AG04450 (cell line): ENCODE measurements at regions of chr4 and their contacts with region 1.

Region 1: GRCh38 chr4:83846193-83846830 is 310.4 kb downstream of the GPAT3 start:
- DNase-seq: no peak
- H3K4me3 ChIP-seq: no peak overlapping the region
- H3K27ac ChIP-seq: no peak overlapping the region
- H3K27me3 ChIP-seq: no peaks in the 10 kb centered on the region
- CTCF ChIP-seq: no peak

Region 2: GRCh38 chr4:82394910-82395309 is 1451.4 kb before region 1 on chr4:
- CTCF ChIA-PET with region 1: interaction called, 10 read pairs
- POLR2A ChIA-PET with region 1: no interaction called
- DNase-seq: no peak
- H3K4me3 ChIP-seq: no peak overlapping the region
- H3K27ac ChIP-seq: no peak overlapping the region
- H3K27me3 ChIP-seq: no peaks in the 10 kb centered on the region
- CTCF ChIP-seq: no peak